Right ventricle myocardium superior (tissue), 1 donor: ENCODE measurements at regions of chr1 and their contacts with region 1.

Region 1: DNA sequence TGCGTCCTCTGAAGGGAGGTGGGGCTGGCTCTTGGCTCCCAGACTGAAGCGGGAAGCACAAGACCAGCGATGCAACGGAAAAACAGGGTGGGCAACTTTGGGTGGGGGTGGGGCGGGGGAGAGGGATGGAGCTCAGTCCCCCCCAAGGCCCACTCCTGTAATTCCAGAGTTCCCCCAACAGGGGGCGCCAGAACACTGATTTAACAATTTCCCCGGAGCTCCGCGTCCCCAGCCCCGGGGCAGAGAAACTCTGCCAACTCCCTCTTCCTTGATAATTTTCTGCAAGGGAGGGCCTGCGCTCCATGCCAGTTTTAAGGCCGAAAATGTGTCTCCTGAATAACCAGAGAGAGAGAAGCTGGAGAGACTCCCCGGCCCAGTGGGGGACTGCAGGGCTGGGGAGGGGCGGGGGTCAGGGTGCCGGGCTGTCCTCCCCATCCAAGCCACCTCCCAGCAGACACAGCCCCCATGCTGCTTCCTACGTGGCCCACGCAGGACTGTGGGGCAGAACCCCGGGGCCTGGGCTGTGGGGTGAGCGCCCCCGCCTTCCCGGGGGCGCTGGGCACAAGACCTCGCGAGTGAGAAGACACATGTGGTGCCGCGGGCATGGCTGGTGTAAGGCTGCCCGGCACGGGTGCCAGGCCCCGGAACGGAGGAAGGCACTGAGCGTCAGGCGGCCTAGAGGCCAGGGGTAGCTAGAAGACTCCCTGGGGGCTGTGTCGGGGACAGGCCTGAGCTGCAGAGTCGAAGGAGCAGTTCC is 51.4 kb downstream of the KIF21B start:
- DNase-seq: peak; percentile 73
- ATAC-seq: peak; percentile 48

Region 2: DNA sequence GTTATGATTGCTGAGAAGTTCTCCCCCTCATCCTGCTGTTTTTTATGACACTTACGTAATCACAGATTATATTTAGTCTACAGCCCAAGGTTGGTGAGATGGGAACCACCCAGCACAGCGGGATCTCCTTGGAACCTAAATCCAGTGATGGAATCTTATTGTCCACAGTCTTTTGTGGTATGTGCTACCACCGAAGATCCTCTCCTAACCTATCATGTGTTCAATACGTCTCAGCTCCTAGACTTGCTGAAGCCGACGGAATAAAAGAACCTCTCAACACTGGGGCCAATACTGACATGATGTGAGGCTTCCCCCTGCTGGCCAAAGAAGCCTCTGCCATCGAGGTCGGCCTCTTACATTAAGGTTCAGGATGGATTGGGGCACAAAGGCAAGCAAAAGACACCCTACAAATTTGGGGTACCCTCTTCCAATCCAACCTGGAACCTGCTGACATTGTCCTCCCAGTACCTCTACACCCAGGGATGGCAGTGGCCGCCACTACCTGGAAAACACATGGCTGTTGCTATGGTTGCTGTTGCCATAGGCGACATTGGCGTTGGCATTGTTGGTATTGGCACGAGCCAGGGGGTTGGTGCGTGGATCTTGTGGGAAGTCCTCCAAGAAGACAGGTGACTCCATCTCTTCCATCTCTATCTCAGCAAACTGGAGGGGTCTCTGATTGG is 70.8 kb after region 1 on chr1:
- intact Hi-C with region 1: loop called (anchors 5 kb)
- DNase-seq: peak; percentile 66
- ATAC-seq: peak; percentile 91

Region 3: GRCh38 chr1:201114236-201115131 is 142.4 kb after region 1 on chr1:
- intact Hi-C with region 1: loop called (anchors 2 kb)
- DNase-seq: peak; percentile 90
- ATAC-seq: peak; percentile 98

Region 4: GRCh38 chr1:201214461-201214860 is 242.3 kb after region 1 on chr1:
- intact Hi-C with region 1: loop called (anchors 10 kb)
- DNase-seq: no peak
- ATAC-seq: no peak